Activated B cell treated with CpG ODN at 0.5 μM for 24 hours (primary cell): ENCODE measurements at regions of chr17 and their contacts with region 1.

Region 1: GRCh38 chr17:1516388-1517161 is at the start of gene INPP5K:
- DNase-seq: peak; percentile 96
- ATAC-seq: peak; percentile 90
- H3K4me3 Mint-ChIP-seq: peak within 1 kb of the TSS; percentile 89
- H3K27ac Mint-ChIP-seq: peak within 1 kb of the TSS; percentile 86
- H3K4me1 Mint-ChIP-seq: peaks cover 19% of the 10 kb centered on the region
- H3K27me3 Mint-ChIP-seq: no peaks in the 10 kb centered on the region
- CTCF ChIP-seq: no peak
- total RNA-seq, gene INPP5K: 46.0 and 50.0 TPM in 2 replicates

Region 2: GRCh38 chr17:1260086-1260769 is 256.3 kb before region 1 on chr17:
- CTCF ChIA-PET with region 1: interaction called, 6 read pairs
- POLR2A ChIA-PET with region 1: interaction called, 4 read pairs
- intact Hi-C with region 1: loop called (anchors 1 kb)
- DNase-seq: no peak
- ATAC-seq: no peak
- H3K4me3 Mint-ChIP-seq: peak overlapping the region; percentile 41
- H3K27ac Mint-ChIP-seq: no peak overlapping the region
- H3K4me1 Mint-ChIP-seq: peaks cover 16% of the 10 kb centered on the region
- H3K27me3 Mint-ChIP-seq: peaks cover 16% of the 10 kb centered on the region
- CTCF ChIP-seq: no peak

Region 3: DNA sequence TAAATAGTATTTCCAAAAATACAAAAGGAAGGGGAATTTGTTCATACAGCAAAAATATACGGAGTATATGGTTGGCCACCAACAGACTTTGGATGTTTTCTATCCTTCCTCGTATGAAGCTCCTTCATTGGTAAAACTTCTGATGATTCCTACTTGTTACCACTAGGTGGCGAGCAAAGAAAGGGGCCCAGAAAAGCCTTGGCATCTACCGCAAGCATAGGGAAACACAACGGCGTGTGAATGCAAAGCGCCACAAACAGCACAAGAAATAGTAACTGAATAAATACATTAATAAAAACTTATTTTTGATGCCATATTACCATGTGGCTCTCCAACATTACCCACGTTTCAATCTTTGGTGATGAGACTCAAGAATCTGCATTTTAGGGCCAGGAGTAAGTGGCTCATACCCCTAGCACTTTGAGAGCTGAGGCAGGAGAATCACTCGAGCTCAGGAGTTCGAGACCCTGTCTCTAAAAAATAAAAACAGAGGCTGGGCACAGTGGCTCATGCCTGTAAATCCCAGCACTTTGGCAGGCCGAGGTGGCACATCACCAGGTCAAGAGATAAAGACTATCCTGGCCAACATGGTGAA is 151.0 kb before region 1 on chr17:
- CTCF ChIA-PET with region 1: interaction called, 133 read pairs
- POLR2A ChIA-PET with region 1: interaction called, 57 read pairs
- intact Hi-C with region 1: loop called (anchors 1 kb)
- DNase-seq: no peak
- ATAC-seq: peak; percentile 45
- H3K4me3 Mint-ChIP-seq: peak overlapping the region; percentile 24
- H3K27ac Mint-ChIP-seq: peak overlapping the region; percentile 56
- H3K4me1 Mint-ChIP-seq: peaks cover 71% of the 10 kb centered on the region
- H3K27me3 Mint-ChIP-seq: no peaks in the 10 kb centered on the region
- CTCF ChIP-seq: no peak

Region 4: GRCh38 chr17:1455797-1456599 is 60.6 kb before region 1 on chr17 and contains the start of gene CRK:
- CTCF ChIA-PET with region 1: interaction called, 18 read pairs
- POLR2A ChIA-PET with region 1: interaction called, 15 read pairs
- intact Hi-C with region 1: loop called (anchors 1 kb)
- DNase-seq: peak; percentile 99
- ATAC-seq: peak; percentile 92
- H3K4me3 Mint-ChIP-seq: peak within 1 kb of the TSS; percentile 94
- H3K27ac Mint-ChIP-seq: peak within 1 kb of the TSS; percentile 87
- H3K4me1 Mint-ChIP-seq: peaks cover 53% of the 10 kb centered on the region
- H3K27me3 Mint-ChIP-seq: no peaks in the 10 kb centered on the region
- CTCF ChIP-seq: no peak
- total RNA-seq, gene CRK: 22.5 and 29.1 TPM in 2 replicates

Region 5: GRCh38 chr17:1474402-1475189 is 42.0 kb before region 1 on chr17:
- CTCF ChIA-PET with region 1: interaction called, 6 read pairs
- POLR2A ChIA-PET with region 1: interaction called, 12 read pairs
- intact Hi-C with region 1: no loop called
- DNase-seq: peak; percentile 58
- ATAC-seq: peak; percentile 64
- H3K4me3 Mint-ChIP-seq: peak overlapping the region; percentile 70
- H3K27ac Mint-ChIP-seq: peak overlapping the region; percentile 79
- H3K4me1 Mint-ChIP-seq: peaks cover 56% of the 10 kb centered on the region
- H3K27me3 Mint-ChIP-seq: no peaks in the 10 kb centered on the region
- CTCF ChIP-seq: no peak

Region 6: DNA sequence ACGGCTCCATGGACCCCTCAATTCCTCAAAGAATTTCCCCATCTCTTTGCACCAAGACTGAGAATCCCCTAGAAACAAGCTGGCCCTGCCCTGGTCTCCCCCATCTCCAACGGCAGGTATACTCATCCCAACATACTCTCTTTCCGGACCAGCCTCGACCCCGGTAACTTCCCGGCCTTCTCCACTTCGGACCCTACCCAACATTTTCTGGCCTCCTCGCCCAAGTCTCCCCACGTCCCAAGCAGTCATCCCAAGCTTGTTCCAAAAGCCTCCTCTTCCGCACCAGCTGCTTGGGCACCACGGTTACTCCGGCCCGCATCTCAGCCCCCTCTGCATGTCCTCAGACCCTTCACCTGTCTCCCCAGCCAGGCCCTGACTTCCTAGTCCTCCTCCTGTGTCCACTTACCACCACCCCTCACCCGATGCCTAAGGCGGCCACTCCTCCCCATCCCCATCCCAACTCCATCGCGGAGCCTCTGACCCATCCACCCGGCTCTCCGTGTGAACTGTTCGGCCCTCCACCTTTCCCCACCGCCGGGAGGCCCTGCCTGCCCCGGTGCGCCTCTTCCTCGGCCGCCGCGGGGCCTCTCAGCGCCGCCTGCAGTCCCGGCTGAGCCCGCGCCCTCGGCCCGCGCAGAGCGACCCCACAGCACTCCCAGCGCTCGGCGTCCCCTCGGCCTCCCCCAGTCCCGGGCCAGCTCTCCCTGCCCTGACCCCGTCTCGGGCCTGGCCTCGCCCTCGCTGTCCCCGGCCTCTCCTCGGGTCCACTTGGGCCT is 45.0 kb after region 1 on chr17:
- CTCF ChIA-PET with region 1: no interaction called
- POLR2A ChIA-PET with region 1: interaction called, 11 read pairs
- intact Hi-C with region 1: loop called (anchors 1 kb)
- DNase-seq: peak; percentile 54
- ATAC-seq: peak; percentile 26
- H3K4me3 Mint-ChIP-seq: peak overlapping the region; percentile 86
- H3K27ac Mint-ChIP-seq: peak overlapping the region; percentile 71
- H3K4me1 Mint-ChIP-seq: peaks cover 52% of the 10 kb centered on the region
- H3K27me3 Mint-ChIP-seq: no peaks in the 10 kb centered on the region
- CTCF ChIP-seq: no peak

Region 7: GRCh38 chr17:1635675-1636465 is 119.3 kb after region 1 on chr17:
- CTCF ChIA-PET with region 1: interaction called, 23 read pairs
- POLR2A ChIA-PET with region 1: interaction called, 45 read pairs
- intact Hi-C with region 1: no loop called
- DNase-seq: no peak
- ATAC-seq: no peak
- H3K4me3 Mint-ChIP-seq: no peak overlapping the region
- H3K27ac Mint-ChIP-seq: no peak overlapping the region
- H3K4me1 Mint-ChIP-seq: peaks cover 12% of the 10 kb centered on the region
- H3K27me3 Mint-ChIP-seq: no peaks in the 10 kb centered on the region
- CTCF ChIP-seq: no peak